Activated naive CD4-positive, alpha-beta T cell treated with anti-CD3 and anti-CD28 coated beads for 36 hours (primary cell): ENCODE measurements at regions of chr14 and their contacts with region 1.

Region 1: DNA sequence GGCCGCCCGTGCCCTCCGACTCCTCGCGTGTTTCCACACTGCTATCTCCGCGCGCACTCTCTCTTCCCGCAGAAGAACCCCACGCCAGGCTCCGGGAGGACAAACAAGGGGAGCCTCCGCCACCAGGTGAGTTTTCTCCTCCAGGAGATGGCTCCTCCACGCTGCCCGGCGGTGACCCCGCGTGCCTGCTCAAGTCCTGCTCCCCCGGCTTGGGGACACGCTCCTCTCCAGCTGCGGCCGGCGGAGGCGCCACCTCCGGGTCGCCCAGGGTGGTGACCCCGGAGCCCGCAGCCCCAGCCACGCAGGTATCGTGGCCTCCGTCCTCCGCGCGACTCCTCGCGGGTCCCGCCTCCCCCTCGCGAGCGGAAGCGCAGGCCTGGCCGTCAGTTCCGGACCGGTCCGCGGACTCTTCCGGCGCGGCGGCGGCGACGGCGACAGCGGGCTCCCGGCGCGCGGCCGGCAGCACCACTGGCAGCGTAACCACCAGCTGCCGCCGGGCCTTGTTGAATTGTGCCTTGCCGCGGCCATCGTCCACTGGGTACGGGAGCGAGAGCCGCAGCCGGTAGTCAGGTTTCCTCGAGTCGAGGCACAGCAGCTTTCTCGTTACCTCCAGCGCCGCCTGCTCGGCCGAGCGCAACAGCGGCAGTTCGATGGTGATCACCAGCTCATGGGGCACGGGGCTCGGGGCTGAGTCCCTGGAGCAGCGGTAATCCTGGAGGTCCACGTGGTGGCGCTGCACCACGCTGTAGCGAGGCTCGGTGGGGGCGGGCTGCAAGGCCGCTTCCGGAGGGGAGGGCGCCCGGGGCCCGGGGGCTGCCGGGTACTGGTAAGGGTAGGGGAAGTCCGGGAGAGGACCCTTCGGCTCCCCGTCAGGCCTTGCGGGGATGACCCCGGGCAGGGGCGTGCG is 1.2 kb downstream of the DNAAF2 start:
- DNase-seq: peak; percentile 96
- H3K4me3 Mint-ChIP-seq: peak overlapping the region; percentile 96
- H3K27ac Mint-ChIP-seq: peak overlapping the region; percentile 92
- H3K4me1 Mint-ChIP-seq: peaks cover 50% of the 10 kb centered on the region
- H3K27me3 Mint-ChIP-seq: no peaks in the 10 kb centered on the region

Region 2: DNA sequence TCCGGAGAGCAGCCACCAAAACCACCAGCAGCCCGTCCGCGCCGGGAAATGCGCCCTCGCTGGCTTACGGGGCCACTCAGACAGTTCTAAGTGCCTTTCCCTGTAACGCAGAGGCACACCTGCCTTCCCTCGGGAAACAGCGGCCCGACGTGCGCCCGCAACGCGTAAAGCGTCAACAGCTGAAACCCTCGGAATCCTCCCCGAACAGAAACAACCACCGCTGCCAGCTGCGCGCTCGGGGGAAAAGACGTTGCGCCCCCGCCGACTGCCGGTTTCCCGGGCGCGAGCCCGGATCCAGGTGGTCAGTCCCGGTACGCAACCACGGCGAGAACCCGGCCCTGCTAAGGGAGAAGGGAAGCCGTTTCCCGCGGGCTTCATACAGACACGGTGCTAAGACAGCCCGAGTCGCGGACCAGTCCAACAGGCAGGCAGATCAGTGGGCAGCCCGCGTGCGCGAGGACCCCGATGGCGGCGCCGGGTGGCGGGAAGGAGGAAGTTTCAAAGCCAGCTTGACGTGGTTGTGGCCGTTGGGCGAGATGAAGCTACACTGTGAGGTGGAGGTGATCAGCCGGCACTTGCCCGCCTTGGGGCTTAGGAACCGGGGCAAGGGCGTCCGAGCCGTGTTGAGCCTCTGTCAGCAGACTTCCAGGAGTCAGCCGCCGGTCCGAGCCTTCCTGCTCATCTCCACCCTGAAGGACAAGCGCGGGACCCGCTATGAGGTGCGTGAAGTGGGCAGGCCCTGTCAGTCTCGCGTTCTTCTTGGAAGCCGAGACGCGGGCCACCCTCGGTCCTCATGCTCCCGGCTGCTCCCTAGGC is 35.2 kb before region 1 on chr14 and contains the start of gene LRR1:
- CTCF ChIA-PET with region 1: interaction called, 6 read pairs
- intact Hi-C with region 1: loop called (anchors 1 kb)
- DNase-seq: peak; percentile 87
- H3K4me3 Mint-ChIP-seq: peak within 1 kb of the TSS; percentile 99
- H3K27ac Mint-ChIP-seq: peak within 1 kb of the TSS; percentile 99
- H3K4me1 Mint-ChIP-seq: peaks cover 20% of the 10 kb centered on the region
- H3K27me3 Mint-ChIP-seq: no peaks in the 10 kb centered on the region
- total RNA-seq, gene LRR1: 47.7 to 49.1 TPM

Region 3: DNA sequence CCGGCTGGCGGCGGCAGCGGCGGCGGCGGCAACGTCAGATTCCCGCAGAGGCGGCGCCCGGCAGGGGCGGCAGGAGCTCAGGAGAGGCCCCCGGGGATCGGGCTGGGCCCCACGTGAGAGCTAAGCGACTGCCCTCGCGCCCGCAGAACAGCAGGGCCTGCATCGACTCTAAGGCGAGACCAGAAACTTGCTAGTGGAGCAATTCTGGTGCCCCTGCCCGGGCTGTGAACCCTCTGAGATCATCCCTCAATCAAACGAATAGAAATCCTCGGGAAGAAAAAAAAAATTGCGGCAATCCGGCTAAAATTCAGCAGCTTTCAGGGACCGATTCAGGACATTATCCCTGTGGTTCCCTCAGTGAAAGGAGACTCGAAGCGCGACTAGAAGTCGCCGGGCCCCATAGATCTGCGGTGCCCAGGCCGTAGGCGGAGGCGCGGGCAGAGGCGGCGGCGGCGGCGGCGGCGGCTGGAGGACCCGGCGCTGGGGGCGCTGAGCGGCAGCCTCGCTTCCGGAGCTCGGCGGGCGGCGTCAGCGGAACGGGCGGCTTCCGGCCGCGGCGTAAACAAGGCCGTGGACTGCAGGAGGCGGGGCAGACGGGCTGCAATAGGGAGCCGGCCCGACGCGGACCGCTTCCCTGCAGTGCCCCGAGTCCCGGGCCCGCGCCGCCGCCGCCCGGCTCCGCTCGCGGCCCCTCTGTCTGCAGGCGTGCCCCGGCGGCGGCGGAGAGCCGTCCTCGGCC is 133.8 kb after region 1 on chr14 and contains the start of gene KLHDC2:
- CTCF ChIA-PET with region 1: interaction called, 6 read pairs
- intact Hi-C with region 1: loop called (anchors 1 kb)
- DNase-seq: peak; percentile 91
- H3K4me3 Mint-ChIP-seq: peak within 1 kb of the TSS; percentile 94
- H3K27ac Mint-ChIP-seq: peak within 1 kb of the TSS; percentile 99
- H3K4me1 Mint-ChIP-seq: peaks cover 34% of the 10 kb centered on the region
- H3K27me3 Mint-ChIP-seq: no peaks in the 10 kb centered on the region
- total RNA-seq, gene KLHDC2: 24.3 to 25.0 TPM

Region 4: DNA sequence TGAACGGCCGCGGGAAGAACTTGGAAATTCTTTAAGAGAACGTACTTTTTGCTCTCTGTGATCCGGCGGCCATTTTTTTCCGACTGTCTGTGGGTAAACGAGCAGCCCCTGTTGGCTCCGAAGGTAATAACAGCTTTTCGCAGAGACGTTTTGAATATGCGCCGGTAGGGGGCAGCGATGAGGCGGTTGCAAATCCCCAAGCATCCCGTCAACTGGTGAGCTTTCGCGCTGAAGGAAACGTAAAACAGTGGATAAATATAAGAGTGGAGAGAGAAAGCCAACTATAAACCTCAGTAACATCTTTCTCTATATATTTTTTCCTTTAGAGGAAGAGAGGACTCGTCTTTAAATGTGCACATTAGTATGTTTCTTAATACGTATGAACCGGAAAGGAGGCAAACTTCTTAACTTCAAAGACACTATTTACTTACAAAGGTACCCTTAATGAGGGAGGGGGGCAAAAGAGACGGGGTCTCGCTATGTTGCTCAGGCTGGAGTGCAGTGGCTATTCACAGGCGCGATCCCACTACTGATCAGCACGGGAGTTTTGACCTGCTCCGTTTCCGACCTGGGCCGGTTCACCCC is 228.3 kb after region 1 on chr14:
- CTCF ChIA-PET with region 1: interaction called, 19 read pairs
- intact Hi-C with region 1: loop called (anchors 1 kb)
- DNase-seq: peak; percentile 91
- H3K4me3 Mint-ChIP-seq: no peak overlapping the region
- H3K27ac Mint-ChIP-seq: no peak overlapping the region
- H3K4me1 Mint-ChIP-seq: peaks cover 14% of the 10 kb centered on the region
- H3K27me3 Mint-ChIP-seq: peaks cover 2% of the 10 kb centered on the region

Region 5: DNA sequence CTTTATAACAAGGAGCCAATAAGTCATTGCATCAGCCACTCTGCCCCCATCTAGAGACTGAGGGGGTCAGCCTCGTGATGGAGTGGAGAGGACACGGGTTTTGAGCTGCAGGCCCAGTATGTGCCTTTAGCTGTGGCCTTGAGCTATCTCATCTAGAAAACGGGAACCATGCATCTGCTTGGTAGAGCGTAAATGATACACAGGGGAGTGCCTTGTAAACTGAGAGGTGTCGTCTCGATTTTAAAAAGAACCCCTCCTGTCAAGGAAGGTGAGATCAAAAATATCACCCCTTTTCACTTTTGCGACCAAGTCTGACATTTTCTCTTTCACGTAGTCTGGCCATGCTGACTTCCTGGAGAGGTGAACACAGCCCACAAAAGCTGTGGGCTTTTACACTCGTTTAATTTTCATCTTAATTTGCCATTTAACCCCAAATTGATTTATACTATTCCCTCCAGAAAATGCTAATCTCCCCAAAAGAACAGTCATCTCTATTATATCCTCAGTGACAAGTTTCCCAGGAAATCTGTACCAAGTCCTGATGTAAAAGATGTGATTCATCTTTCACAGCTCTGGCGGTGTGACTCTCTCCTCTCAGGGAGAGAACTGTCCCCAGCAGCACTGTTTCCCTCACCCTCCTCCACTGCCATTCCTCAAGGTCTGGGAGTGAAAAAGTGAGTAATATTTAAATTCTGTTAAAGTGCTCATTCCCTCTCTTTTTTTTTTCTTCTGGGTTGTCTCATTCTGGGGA is 451.9 kb after region 1 on chr14:
- CTCF ChIA-PET with region 1: interaction called, 3 read pairs
- intact Hi-C with region 1: loop called (anchors 2 kb)
- DNase-seq: peak; percentile 77
- H3K4me3 Mint-ChIP-seq: peak overlapping the region; percentile 6
- H3K27ac Mint-ChIP-seq: peak overlapping the region; percentile 83
- H3K4me1 Mint-ChIP-seq: peaks cover 93% of the 10 kb centered on the region
- H3K27me3 Mint-ChIP-seq: no peaks in the 10 kb centered on the region

Region 6: GRCh38 chr14:50311975-50312733 is 678.3 kb after region 1 on chr14 and contains the starts of genes DMAC2L and L2HGDH:
- CTCF ChIA-PET with region 1: no interaction called
- intact Hi-C with region 1: loop called (anchors 1 kb)
- DNase-seq: peak; percentile 89
- H3K4me3 Mint-ChIP-seq: peak within 1 kb of the TSS; percentile 94
- H3K27ac Mint-ChIP-seq: peak within 1 kb of the TSS; percentile 95
- H3K4me1 Mint-ChIP-seq: peaks cover 41% of the 10 kb centered on the region
- H3K27me3 Mint-ChIP-seq: no peaks in the 10 kb centered on the region
- total RNA-seq, gene DMAC2L: 11.7 to 13.7 TPM
- total RNA-seq, gene L2HGDH: 13.5 to 14.3 TPM

Region 7: DNA sequence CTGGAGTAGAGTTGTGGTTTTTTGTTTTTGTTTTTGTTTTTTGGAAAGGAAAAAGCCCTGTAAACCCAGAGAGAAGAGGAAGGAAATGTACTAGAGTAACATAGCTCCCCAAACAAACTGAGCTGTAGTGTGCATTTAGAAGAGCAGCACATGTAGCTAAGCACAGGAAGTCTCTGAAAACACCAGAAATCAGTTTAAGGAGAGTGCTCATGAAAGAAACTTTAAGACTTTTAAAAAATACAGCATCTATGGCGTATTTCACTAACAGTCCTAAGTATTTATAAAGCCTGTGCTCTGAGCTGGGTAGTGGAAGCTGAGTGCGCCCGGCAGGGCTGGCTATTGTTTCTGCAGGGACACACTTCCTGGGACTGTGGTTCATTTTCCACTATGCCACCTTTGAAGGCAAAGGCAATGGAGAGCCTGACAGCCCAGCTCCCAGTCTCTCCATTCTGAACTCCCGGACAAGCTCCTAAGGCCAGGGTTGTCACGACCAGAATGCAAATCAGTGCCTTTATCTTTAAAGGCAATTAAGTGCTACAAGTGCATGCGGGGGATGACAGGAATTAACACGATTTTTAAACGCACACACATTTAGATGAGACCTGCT is 1151.7 kb after region 1 on chr14:
- CTCF ChIA-PET with region 1: no interaction called
- intact Hi-C with region 1: loop called (anchors 5 kb)
- DNase-seq: no peak
- H3K4me3 Mint-ChIP-seq: no peak overlapping the region
- H3K27ac Mint-ChIP-seq: no peak overlapping the region
- H3K4me1 Mint-ChIP-seq: peaks cover 66% of the 10 kb centered on the region
- H3K27me3 Mint-ChIP-seq: no peaks in the 10 kb centered on the region